Calu3 (cell line): ENCODE measurements at regions of chr7 and their contacts with region 1.

Region 1: GRCh38 chr7:11786186-11786585 is 45.8 kb downstream of the THSD7A start:
- DNase-seq: peak; percentile 65
- H3K4me3 Mint-ChIP-seq: peak overlapping the region; percentile 0
- H3K27ac Mint-ChIP-seq: peak overlapping the region; percentile 4
- H3K4me1 Mint-ChIP-seq: peaks cover 20% of the 10 kb centered on the region
- H3K27me3 Mint-ChIP-seq: no peaks in the 10 kb centered on the region
- CTCF ChIP-seq: no peak

Region 2: DNA sequence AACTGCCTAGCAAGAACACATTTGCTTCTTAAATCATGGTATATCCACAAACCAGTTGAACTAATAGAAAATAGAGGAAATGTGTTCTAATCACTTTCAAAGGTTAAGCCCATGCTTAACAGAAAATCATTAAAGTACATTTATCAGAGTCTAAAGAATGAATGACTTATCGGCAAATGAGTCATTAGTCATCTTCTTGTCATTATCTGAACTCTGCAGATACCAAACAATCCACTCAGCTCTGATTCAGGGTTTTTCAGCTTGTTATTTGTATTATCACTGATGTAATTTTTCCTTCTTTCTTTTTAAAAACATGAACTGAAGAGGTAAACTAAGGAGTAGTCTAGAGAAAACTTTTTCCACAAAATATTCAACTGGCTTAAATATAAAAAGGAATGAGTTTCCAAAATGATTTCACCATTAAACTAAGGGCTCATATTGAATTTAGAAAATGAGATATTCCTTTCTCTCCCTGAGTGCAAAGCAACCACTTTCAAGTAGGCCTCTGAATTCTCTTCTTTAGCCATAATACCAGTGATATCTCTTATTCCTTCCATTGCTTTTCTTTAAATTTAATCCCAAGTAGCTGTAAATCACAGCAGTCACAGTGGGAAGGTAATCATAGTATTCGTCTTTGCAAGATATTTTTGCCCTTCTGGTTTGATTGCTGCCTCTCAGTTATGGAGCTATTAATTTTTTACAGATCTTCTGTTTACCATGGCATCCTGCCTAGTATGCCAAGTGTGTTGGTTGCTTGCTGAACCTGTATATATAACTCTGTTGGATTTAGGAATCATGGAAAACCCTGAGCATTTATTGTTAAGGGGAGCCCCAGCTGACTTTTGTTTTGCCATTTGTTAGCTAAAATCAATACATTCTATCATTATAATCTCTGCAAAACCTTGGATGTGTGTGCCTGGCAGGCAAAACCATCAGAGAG is 79.2 kb before region 1 on chr7:
- CTCF ChIA-PET with region 1: no interaction called
- intact Hi-C with region 1: loop called (anchors 5 kb)
- DNase-seq: peak; percentile 59
- H3K4me3 Mint-ChIP-seq: peak overlapping the region; percentile 13
- H3K27ac Mint-ChIP-seq: peak overlapping the region; percentile 27
- H3K4me1 Mint-ChIP-seq: peaks cover 24% of the 10 kb centered on the region
- H3K27me3 Mint-ChIP-seq: no peaks in the 10 kb centered on the region
- CTCF ChIP-seq: no peak

Region 3: DNA sequence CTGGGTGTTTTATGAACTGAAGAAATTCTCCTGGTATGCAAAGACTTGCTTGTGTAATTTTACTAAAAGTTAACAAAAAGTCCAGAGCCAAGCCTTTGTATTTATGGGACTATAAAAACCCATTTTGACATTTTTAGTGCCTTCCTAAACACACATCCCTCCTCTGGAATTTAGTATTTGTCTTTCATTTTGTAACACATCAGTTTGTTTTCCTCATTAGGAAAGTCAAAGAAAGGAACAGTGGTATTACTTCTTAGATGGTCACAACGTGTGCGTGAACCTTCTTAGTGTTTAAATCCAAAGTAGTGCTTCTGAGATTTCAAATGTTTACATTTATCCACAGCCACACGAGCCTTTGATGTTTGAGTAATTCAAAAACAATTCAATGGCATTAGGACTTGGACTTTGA is 321.7 kb after region 1 on chr7:
- CTCF ChIA-PET with region 1: no interaction called
- intact Hi-C with region 1: no loop called
- DNase-seq: no peak
- H3K4me3 Mint-ChIP-seq: no peak overlapping the region
- H3K27ac Mint-ChIP-seq: no peak overlapping the region
- H3K4me1 Mint-ChIP-seq: peaks cover 47% of the 10 kb centered on the region
- H3K27me3 Mint-ChIP-seq: no peaks in the 10 kb centered on the region
- CTCF ChIP-seq: no peak